GM12878 (cell line): ENCODE measurements at regions of chr6 and their contacts with region 1.

Region 1: DNA sequence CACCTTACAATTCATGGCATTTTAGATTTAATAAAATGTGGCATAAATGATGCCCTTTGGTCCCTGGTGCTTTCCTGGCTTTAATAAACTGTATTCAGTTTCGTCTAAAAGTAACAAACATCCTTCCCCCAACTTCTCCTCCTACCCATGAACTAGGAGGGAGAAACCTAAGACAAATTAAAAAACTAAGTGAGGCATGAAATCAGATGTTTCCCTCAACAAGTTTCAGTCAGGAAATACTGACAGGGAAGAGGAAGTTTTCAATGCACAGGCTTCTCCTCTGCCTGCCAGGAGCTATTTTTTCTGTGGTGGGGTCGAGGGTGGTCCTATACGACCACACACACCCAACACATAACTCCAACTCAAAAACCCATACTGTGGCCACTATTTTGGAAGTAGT is 10.0 kb downstream of the HBS1L start:
- DNase-seq: no peak
- ATAC-seq: peak; percentile 20
- H3K4me3 ChIP-seq: peak overlapping the region; percentile 6; the same call in 1 of the 2 replicates
- H3K27ac ChIP-seq: 0 out of 2 replicates have a peak overlapping the region, but pooled peaks have one; percentile 13
- H3K4me1 ChIP-seq: peaks cover 9% of the 10 kb centered on the region
- H3K27me3 ChIP-seq: no peaks in the 10 kb centered on the region
- CTCF ChIP-seq: no peak
- EP300 ChIP-seq: no peak
- POLR2A ChIP-seq: no peak
- RAD21 ChIP-seq: no peak

Region 2: DNA sequence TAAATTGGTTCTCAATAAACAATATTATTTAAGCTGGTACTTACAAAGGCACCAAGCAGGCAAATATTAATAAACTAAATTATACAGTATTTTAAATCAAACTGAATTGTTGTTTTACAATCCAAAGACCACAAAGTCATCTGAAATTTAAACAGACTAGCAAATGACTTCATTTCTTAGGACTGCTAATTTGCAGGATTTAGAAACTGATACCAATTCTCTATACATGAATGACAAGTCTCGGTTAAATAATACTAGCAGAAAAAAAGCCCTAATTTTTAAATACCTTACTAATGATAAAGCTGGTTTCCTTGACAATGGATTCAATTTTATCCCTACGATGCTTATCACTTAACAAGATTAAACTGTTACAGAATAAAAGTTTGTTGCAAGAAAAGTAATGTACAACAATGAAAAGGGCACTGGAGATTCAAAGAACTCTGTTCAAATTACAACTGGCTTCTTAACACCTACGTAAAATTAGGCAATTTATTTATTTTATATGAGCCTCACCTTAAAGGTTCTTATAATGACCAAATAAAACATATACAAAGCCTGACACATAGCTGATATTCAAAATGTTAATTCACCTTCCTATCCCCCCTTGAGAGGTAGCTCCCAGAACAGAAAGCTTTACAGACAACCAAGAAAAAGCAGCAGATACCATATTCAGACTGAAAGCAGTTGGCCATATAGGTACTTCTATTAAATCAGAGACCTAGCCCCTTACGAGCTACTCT is 23.2 kb before region 1 on chr6:
- CTCF ChIA-PET with region 1: interaction called, 3 read pairs
- POLR2A ChIA-PET with region 1: interaction called, 10 read pairs
- RAD21 ChIA-PET with region 1: interaction called, 5 read pairs
- SMC1A ChIA-PET with region 1: interaction called, 9 read pairs
- in situ Hi-C with region 1: no loop called
- intact Hi-C with region 1: no loop called
- DNase-seq: no peak
- ATAC-seq: peak; percentile 91
- H3K4me3 ChIP-seq: 0 out of 2 replicates have a peak overlapping the region, but pooled peaks have one; percentile 13
- H3K27ac ChIP-seq: peak overlapping the region; percentile 54; the same call in 1 of the 2 replicates
- H3K4me1 ChIP-seq: peaks cover 12% of the 10 kb centered on the region; the same call in 1 of the 2 replicates
- H3K27me3 ChIP-seq: no peaks in the 10 kb centered on the region
- CTCF ChIP-seq: no peak
- EP300 ChIP-seq: peak in 1 of 2 experiments; percentile 26; a peak in 1 of 4 replicates
- POLR2A ChIP-seq: no peak
- RAD21 ChIP-seq: no peak

Region 3: GRCh38 chr6:135030056-135030473 is 14.6 kb before region 1 on chr6:
- CTCF ChIA-PET with region 1: interaction called, 3 read pairs
- POLR2A ChIA-PET with region 1: interaction called, 5 read pairs
- RAD21 ChIA-PET with region 1: interaction called, 4 read pairs
- SMC1A ChIA-PET with region 1: interaction called, 10 read pairs
- in situ Hi-C with region 1: no loop called
- intact Hi-C with region 1: no loop called
- DNase-seq: peak; percentile 86
- ATAC-seq: peak; percentile 97
- H3K4me3 ChIP-seq: 0 out of 2 replicates have a peak overlapping the region, but pooled peaks have one; percentile 19
- H3K27ac ChIP-seq: peak overlapping the region; percentile 76
- H3K4me1 ChIP-seq: peaks cover 22% of the 10 kb centered on the region
- H3K27me3 ChIP-seq: no peaks in the 10 kb centered on the region
- CTCF ChIP-seq: no peak
- EP300 ChIP-seq: peak; percentile 84 to 86; a peak in 3 of 4 replicates
- POLR2A ChIP-seq: no peak
- RAD21 ChIP-seq: 0 out of 2 replicates have a peak, but pooled peaks have one; percentile 11